ENCODE measurements at regions of chr2 and their contacts with region 1.

Region 1: GRCh38 chr2:74876081-74876886 is 42.4 kb downstream of the HK2 start:
- DNase-seq: peak; percentile 35 to 63 (median 47)
- H3K4me3 ChIP-seq: no peak overlapping the region
- H3K27ac ChIP-seq: peak overlapping the region in 3 of 5 donors; percentile 28 to 73 (median 68)
- H3K4me1 ChIP-seq: peaks cover 4 to 15% of the 10 kb centered on the region in 2 donors
- H3K27me3 ChIP-seq: no peaks in the 10 kb centered on the region
- CTCF ChIP-seq: peak; percentile 63 to 87 (median 72)
- POLR2A ChIP-seq: no peak

Region 2: DNA sequence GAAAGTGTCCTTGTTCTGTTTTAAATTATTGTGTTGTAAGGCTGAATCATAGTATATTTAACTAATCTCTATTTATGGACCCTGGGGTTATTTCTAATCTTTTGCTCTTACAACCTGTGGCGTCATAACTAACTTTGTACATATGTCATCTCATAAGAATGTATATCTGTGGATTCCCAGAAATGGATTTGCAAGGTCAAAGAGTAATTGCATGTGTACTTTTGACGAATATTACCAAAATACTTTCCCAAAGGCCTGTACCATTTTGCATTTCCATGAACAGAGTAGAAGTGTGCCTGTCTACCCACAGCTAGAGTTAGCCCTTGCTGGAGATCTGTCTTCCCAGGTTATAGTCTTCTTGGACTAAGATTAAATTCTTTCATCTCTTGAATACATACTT is 179.5 kb before region 1 on chr2:
- intact Hi-C with region 1: loop called in 1 of 2 experiments (anchors 5 kb)
- DNase-seq: no peak
- H3K4me3 ChIP-seq: no peak overlapping the region
- H3K27ac ChIP-seq: no peak overlapping the region
- H3K4me1 ChIP-seq: no peaks in the 10 kb centered on the region
- H3K27me3 ChIP-seq: no peaks in the 10 kb centered on the region
- CTCF ChIP-seq: no peak
- POLR2A ChIP-seq: no peak

Region 3: GRCh38 chr2:74715078-74715791 is 161.0 kb before region 1 on chr2:
- intact Hi-C with region 1: loop called (anchors 2 to 5 kb)
- DNase-seq: peak; percentile 66 to 89 (median 81)
- H3K4me3 ChIP-seq: peak overlapping the region in 2 of 4 donors; percentile 44
- H3K27ac ChIP-seq: peak overlapping the region in 3 of 5 donors; percentile 4 to 46 (median 7)
- H3K4me1 ChIP-seq: peaks cover 0 to 4% of the 10 kb centered on the region in 2 donors
- H3K27me3 ChIP-seq: peaks cover 10% of the 10 kb centered on the region
- CTCF ChIP-seq: peak; percentile 80 to 93 (median 88)
- POLR2A ChIP-seq: no peak

Region 4: DNA sequence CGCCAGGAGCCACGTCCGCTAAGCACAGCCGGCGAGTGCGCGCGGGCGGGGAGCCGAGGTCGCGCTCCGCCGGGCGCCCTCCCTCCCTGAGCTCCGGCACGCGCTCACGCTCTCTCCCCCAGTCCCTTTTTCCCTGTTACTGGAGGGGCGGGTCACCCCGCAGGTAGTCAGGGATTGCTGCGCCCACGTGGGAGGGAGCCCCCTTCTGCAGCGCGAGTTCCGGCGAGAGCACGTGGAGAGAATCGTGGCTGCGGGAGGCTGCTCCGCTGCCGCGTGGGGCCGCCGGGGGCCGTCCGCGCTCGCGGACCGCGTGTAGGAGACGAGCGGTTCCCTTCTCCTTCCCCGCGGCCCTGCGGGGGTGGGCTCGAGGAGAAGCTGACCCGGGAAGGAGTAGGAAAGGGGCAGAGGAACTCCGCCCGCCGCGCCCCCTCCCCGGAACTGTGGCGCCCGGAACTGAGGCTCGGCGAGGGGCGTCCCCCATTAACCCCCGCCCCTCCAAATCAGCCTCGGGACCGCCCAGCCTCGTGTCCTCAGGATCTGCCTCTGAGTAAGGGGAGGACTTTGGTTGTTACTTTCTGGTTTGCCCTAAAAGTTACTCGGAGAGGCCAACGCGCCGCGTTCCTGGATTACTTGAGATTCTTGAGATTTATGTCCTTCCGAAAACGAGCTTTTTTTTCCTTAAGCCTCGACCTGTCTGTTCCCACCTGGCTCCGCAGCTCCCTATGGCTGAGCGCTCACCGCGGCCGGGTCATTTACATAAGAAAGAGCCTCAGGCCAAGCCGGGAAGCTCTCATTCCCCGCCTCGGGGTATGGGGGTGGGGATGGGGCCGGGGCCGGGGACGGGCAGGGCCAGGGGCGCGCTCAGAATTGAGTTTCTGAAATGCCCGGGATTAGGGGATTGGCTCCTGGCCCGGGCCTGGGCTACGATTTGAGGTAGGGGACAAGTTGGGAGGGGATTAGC is 41.2 kb before region 1 on chr2:
- intact Hi-C with region 1: loop called in 1 of 2 experiments (anchors 5 kb)
- DNase-seq: peak in 3 of 7 donors; percentile 24 to 34 (median 25)
- H3K4me3 ChIP-seq: peak overlapping the region in 3 of 4 donors; percentile 2 to 52 (median 38)
- H3K27ac ChIP-seq: peak overlapping the region in 3 of 5 donors; percentile 6 to 64 (median 20)
- H3K4me1 ChIP-seq: peaks cover 6 to 10% of the 10 kb centered on the region in 2 donors
- H3K27me3 ChIP-seq: peaks cover 10% of the 10 kb centered on the region
- CTCF ChIP-seq: no peak
- POLR2A ChIP-seq: no peak

Region 5: DNA sequence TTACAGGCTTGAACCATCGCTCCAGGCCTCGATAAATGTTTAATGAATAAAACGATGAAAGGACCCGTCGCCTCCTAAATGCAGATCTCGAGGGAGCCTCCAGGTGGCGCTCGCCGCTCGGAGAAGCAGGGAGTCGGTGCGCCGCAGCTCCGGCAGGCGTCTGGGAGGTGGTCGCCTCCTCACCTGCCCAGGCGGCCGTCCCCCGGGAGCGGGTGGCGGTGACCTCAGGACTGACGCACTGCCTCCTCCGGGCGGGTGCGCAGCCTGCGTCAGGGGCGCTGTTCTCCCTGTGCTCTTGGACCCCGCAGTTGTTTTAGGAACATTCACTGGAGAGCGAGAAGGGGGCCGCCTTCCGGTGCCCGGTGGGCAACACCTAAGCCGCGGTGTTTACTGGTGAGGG is 43.5 kb after region 1 on chr2:
- intact Hi-C with region 1: no loop called
- DNase-seq: peak; percentile 46 to 76 (median 66)
- H3K4me3 ChIP-seq: peak overlapping the region in 1 of 4 donors; percentile 34
- H3K27ac ChIP-seq: no peak overlapping the region
- H3K4me1 ChIP-seq: no peaks in the 10 kb centered on the region
- H3K27me3 ChIP-seq: peaks cover 3% of the 10 kb centered on the region
- CTCF ChIP-seq: peak; percentile 83 to 93 (median 86)
- POLR2A ChIP-seq: no peak

Region 6: GRCh38 chr2:75194184-75194868 is 318.0 kb after region 1 on chr2:
- intact Hi-C with region 1: no loop called
- DNase-seq: no peak
- H3K4me3 ChIP-seq: no peak overlapping the region
- H3K27ac ChIP-seq: no peak overlapping the region
- H3K4me1 ChIP-seq: peaks cover under 1 to 4% of the 10 kb centered on the region in 2 donors
- H3K27me3 ChIP-seq: peaks cover 22% of the 10 kb centered on the region
- CTCF ChIP-seq: no peak
- POLR2A ChIP-seq: no peak

Region 7: GRCh38 chr2:75290600-75291150 is 414.4 kb after region 1 on chr2:
- intact Hi-C with region 1: no loop called
- DNase-seq: no peak
- H3K4me3 ChIP-seq: no peak overlapping the region
- H3K27ac ChIP-seq: no peak overlapping the region
- H3K4me1 ChIP-seq: no peaks in the 10 kb centered on the region
- H3K27me3 ChIP-seq: no peaks in the 10 kb centered on the region
- CTCF ChIP-seq: peak in 2 of 6 experiments; percentile 11 to 26
- POLR2A ChIP-seq: no peak

Measured in adrenal gland (tissue), 19 donors.